Activated CD4-positive, alpha-beta memory T cell treated with anti-CD3 and anti-CD28 coated beads for 36 hours (primary cell): ENCODE measurements at regions of chr7 and their contacts with region 1.

Region 1: GRCh38 chr7:92633211-92633906 is 43.2 kb upstream of the FAM133B start:
- DNase-seq: peak; percentile 53
- H3K4me3 Mint-ChIP-seq: peak overlapping the region; percentile 36
- H3K27ac Mint-ChIP-seq: peak overlapping the region; percentile 93
- H3K4me1 Mint-ChIP-seq: peaks cover 81% of the 10 kb centered on the region
- H3K27me3 Mint-ChIP-seq: no peaks in the 10 kb centered on the region

Region 2: GRCh38 chr7:92648067-92648466 is 14.7 kb after region 1 on chr7:
- CTCF ChIA-PET with region 1: interaction called, 11 read pairs
- POLR2A ChIA-PET with region 1: interaction called, 85 read pairs
- intact Hi-C with region 1: loop called (anchors 1 kb)
- DNase-seq: no peak
- H3K4me3 Mint-ChIP-seq: peak overlapping the region; percentile 16
- H3K27ac Mint-ChIP-seq: peak overlapping the region; percentile 96
- H3K4me1 Mint-ChIP-seq: peaks cover 91% of the 10 kb centered on the region
- H3K27me3 Mint-ChIP-seq: no peaks in the 10 kb centered on the region

Region 3: GRCh38 chr7:92682903-92683539 is 49.7 kb after region 1 on chr7:
- CTCF ChIA-PET with region 1: no interaction called
- POLR2A ChIA-PET with region 1: interaction called, 5 read pairs
- intact Hi-C with region 1: loop called (anchors 1 kb)
- DNase-seq: peak; percentile 20
- H3K4me3 Mint-ChIP-seq: no peak overlapping the region
- H3K27ac Mint-ChIP-seq: peak overlapping the region; percentile 87
- H3K4me1 Mint-ChIP-seq: peaks cover 85% of the 10 kb centered on the region
- H3K27me3 Mint-ChIP-seq: no peaks in the 10 kb centered on the region

Region 4: GRCh38 chr7:92731335-92732063 is 98.1 kb after region 1 on chr7:
- CTCF ChIA-PET with region 1: no interaction called
- POLR2A ChIA-PET with region 1: interaction called, 3 read pairs
- intact Hi-C with region 1: loop called (anchors 1 kb)
- DNase-seq: peak; percentile 71
- H3K4me3 Mint-ChIP-seq: peak overlapping the region; percentile 10
- H3K27ac Mint-ChIP-seq: peak overlapping the region; percentile 96
- H3K4me1 Mint-ChIP-seq: peaks cover 71% of the 10 kb centered on the region
- H3K27me3 Mint-ChIP-seq: no peaks in the 10 kb centered on the region

Region 5: GRCh38 chr7:92809397-92810241 is 176.3 kb after region 1 on chr7:
- CTCF ChIA-PET with region 1: interaction called, 3 read pairs
- POLR2A ChIA-PET with region 1: interaction called, 6 read pairs
- intact Hi-C with region 1: loop called (anchors 1 kb)
- DNase-seq: peak; percentile 83
- H3K4me3 Mint-ChIP-seq: peak overlapping the region; percentile 39
- H3K27ac Mint-ChIP-seq: peak overlapping the region; percentile 89
- H3K4me1 Mint-ChIP-seq: peaks cover 73% of the 10 kb centered on the region
- H3K27me3 Mint-ChIP-seq: no peaks in the 10 kb centered on the region

Region 6: DNA sequence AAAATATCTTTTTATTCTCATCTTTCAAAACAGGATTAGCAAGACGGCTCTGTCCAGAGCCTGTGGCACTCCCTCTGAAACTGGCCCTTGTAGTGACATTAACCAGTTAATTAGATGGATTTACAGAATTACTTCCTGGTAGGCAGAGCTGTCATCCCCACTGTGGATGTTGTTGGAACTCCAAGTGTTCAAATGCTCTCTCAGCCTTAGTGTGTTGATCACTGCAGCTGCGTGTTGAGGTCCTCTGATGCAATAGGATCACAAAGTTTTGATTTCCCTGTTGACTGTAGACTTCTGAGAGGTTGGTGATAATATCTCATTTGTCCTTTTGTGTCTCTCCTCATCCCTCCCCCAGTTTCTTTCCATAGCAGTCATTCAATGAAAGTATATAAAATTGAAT is 320.3 kb after region 1 on chr7:
- CTCF ChIA-PET with region 1: no interaction called
- POLR2A ChIA-PET with region 1: no interaction called
- intact Hi-C with region 1: loop called (anchors 5 kb)
- DNase-seq: peak; percentile 31
- H3K4me3 Mint-ChIP-seq: no peak overlapping the region
- H3K27ac Mint-ChIP-seq: peak overlapping the region; percentile 60
- H3K4me1 Mint-ChIP-seq: peaks cover 35% of the 10 kb centered on the region
- H3K27me3 Mint-ChIP-seq: peaks cover 4% of the 10 kb centered on the region

Region 7: DNA sequence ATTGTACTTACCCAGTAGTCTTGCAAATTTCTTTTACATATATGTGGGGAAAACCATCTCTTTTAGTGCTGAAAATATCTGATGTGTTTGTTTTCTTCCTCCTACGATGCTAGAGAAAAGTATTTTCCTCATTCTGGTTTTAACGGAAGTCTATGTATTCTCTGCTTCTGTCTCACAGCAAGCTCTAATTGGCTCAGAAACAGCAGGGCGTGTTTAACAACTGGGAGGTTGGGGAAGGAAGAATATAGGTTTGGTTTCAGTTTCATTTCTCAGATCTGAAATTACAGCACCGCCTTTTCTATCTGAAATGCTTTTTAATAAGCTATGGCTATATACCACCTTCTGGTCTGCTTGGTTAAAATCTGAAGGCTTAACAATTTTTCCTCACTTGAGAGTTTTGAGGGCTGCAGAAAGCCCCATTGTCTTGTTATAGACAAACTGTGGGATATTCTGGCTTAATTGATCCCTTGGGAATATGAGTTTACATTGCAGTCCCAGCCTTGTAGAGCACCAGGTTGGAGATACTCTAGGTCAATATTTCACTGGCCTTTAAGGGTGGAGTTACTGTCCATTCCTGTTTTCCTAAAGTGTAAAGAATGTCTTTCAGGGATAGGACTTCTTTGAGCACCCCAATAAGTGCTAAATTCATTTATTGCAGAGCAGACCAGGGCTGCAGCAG is 484.6 kb after region 1 on chr7 and contains the start of gene SAMD9:
- CTCF ChIA-PET with region 1: no interaction called
- POLR2A ChIA-PET with region 1: no interaction called
- intact Hi-C with region 1: loop called (anchors 5 kb)
- DNase-seq: peak; percentile 55
- H3K4me3 Mint-ChIP-seq: peak within 1 kb of the TSS; percentile 69
- H3K27ac Mint-ChIP-seq: peak within 1 kb of the TSS; percentile 69
- H3K4me1 Mint-ChIP-seq: peaks cover 50% of the 10 kb centered on the region
- H3K27me3 Mint-ChIP-seq: no peaks in the 10 kb centered on the region
- total RNA-seq, gene SAMD9: 6.9 to 7.2 TPM